Aorta (tissue), 5 donors: ENCODE measurements at regions of chrX and their contacts with region 1.

Region 1: GRCh38 chrX:110407910-110408545 is 49.4 kb downstream of the RTL9 start:
- DNase-seq: no peak
- ATAC-seq: peak; percentile 74
- H3K4me3 ChIP-seq: no peak overlapping the region
- H3K27ac ChIP-seq: no peak overlapping the region
- H3K4me1 ChIP-seq: no peaks in the 10 kb centered on the region
- H3K27me3 ChIP-seq: no peaks in the 10 kb centered on the region

Region 2: GRCh38 chrX:110156167-110156754 is 251.8 kb before region 1 on chrX:
- intact Hi-C with region 1: loop called (anchors 2 to 5 kb)
- DNase-seq: no peak
- ATAC-seq: no peak
- H3K4me3 ChIP-seq: no peak overlapping the region
- H3K27ac ChIP-seq: no peak overlapping the region
- H3K4me1 ChIP-seq: no peaks in the 10 kb centered on the region
- H3K27me3 ChIP-seq: no peaks in the 10 kb centered on the region